Spleen (tissue), 13 donors: ENCODE measurements at regions of chr2 and their contacts with region 1.

Region 1: DNA sequence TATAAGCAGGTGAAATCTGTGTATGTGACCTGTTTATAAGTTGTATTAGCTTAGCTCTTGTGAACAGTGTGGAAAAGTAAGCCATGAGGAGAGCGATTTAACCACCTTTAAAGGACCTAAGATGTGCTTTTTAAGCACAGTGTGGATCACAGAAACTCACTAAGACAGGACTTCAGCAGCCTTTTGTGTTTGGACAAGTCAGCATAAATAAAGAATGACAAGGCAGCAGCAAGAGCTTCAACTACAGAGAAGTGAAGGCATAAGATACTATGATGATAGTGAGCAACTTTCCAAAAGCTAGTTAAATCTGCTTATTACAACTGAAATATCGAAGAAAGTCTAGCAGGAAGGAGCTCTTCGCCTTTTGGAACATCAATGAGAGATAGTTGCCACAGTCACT is 8.9 kb downstream of the HNRNPA3 start:
- DNase-seq: no peak
- H3K4me3 ChIP-seq: no peak overlapping the region
- H3K27ac ChIP-seq: peak overlapping the region in 3 of 8 donors; percentile 30 to 61 (median 33)
- H3K4me1 ChIP-seq: peaks cover 8 to 80% (median 53%) of the 10 kb centered on the region in 6 donors
- H3K27me3 ChIP-seq: no peaks in the 10 kb centered on the region
- CTCF ChIP-seq: no peak
- POLR2A ChIP-seq: no peak

Region 2: DNA sequence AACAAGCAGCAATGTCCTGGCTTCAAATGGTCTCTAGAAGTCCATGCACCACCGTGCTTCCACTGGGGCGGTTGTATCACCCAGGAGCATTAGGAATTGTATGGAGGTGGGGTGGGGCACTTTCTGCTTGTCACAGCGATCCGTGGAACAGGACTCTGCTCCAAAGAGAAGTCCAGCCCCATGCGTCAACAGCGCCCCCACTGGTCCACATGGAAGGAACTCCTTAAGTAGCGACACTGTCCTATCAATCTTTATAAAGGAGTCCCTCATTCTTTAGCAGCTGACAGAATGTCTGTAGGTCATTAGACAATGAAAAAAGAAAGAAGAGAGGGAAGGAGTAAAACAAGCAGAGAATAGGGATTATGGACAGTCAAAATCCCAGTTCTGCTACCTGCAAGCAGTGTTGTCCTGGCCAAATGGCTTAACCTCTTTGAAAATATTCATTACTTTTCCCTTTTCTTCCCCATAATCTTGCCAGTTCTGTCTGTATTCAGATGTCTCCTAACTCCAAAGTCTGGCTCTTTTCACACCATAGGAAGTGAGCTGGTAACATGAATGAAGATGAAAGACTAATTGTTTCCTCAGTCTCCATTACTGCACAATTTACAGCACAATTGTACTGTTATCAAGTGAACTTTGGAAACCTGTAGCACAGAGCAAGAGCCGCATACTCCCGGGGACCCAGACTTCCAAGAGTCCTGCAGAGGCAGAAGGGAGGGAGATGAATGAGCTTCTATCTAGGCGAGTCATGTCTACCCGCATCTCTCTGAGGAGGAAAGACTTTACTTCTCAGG is 33.1 kb after region 1 on chr2:
- intact Hi-C with region 1: loop called (anchors 5 kb)
- DNase-seq: no peak
- H3K4me3 ChIP-seq: peak overlapping the region in 1 of 8 donors; percentile 3
- H3K27ac ChIP-seq: peak overlapping the region in 5 of 8 donors; percentile 9 to 89 (median 28)
- H3K4me1 ChIP-seq: peaks cover 53 to 100% (median 97%) of the 10 kb centered on the region in 6 donors
- H3K27me3 ChIP-seq: no peaks in the 10 kb centered on the region
- CTCF ChIP-seq: peak in 4 of 11 experiments; percentile 16 to 29 (median 26)
- POLR2A ChIP-seq: no peak

Region 3: DNA sequence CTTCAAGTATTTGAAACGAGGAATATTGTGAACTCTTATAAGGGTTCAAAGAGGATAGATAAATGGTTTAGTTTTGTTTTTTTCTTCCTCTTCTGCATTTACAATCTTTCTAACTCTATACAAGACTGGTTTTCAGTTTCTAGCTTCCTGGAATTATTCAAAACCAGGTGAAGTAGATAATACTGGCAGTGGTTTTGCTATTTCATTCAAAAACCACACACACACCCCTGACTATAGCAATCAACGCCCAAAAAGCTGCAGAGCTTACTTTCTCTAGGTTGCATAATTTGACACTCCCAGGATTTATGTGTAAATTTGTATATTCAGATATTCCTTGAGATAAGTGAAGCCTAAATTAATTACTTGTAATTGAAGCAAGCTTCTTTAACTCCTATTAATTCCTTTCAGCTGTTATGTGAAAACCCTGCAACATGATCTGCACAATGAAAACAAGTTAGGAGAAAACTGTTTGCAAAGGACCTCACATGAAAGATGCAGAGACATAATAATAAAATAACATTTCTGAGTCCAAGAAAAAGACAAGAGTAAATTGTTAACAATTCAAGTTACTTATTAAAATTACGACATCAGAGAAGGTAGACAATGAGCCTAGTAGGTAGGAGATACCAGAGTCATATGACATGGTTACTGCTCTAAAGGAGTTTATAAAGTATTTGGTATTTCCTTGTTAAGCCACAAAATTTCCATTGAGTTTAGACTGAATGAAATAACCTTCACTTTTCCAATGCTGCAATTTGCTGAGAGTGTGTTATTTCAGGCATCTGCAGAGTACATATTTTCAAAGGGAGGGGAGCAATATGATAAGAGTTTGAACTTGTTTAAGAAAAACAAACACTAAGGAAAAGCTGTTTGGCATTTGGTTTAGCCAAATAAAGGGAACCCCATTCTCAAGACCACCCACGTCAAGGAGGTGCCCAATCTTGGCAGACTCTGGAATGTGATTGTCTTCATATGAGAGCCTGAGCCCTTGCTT is 44.6 kb after region 1 on chr2:
- intact Hi-C with region 1: no loop called
- DNase-seq: no peak
- H3K4me3 ChIP-seq: peak overlapping the region in 6 of 8 donors; percentile 71 to 95 (median 88)
- H3K27ac ChIP-seq: peak overlapping the region; percentile 96 to 100 (median 100)
- H3K4me1 ChIP-seq: peaks cover 16 to 40% (median 29%) of the 10 kb centered on the region in 6 donors
- H3K27me3 ChIP-seq: no peaks in the 10 kb centered on the region
- CTCF ChIP-seq: no peak
- POLR2A ChIP-seq: no peak